ENCODE measurements at regions of chr4 and their contacts with region 1.

Region 1: DNA sequence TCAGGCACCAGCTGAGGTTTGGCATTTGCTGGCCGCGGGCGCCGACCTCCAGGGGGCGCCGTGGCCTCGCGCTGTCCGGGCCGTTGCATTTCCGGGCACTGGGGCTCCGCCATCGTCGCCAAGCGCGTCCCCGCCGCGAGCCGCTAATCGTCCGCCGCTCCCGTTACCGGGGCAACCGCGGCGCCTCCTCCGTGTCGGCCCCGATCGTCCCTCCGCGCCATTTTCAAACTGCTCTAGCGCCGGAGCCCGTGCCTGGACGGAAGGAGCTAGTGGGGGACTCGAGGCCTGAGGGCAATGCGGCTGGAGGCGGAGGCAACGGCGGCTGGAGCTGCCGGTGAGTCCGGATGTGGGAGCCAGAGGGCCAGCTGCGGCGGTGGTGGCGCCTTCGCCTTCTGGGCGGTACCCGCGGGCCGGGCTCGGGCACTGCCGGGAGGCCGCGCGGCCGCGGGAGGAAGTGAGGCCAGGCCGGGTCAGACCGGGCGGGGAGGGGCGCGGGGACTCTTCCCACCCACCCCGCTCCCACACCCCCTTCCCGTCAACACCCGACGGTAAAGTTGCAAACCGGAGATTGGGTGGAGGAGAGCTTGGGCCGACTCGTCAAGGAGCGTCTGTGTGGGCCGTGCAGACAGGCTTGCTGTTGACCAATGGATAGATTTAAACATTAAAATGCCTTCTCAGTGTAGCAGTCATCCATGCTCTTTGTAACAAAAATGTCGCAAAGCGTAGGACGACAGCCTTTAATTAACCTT is at the start of gene CEP135:
- DNase-seq: peak; percentile 96
- ATAC-seq: peak; percentile 78
- H3K4me3 ChIP-seq: peak within 1 kb of the TSS; percentile 73 to 91 (median 87)
- H3K4me3 Mint-ChIP-seq: peak within 1 kb of the TSS; percentile 89
- H3K27ac ChIP-seq: peak within 1 kb of the TSS; percentile 100
- H3K27ac Mint-ChIP-seq: peak within 1 kb of the TSS; percentile 98
- H3K4me1 ChIP-seq: peaks cover 30 to 37% of the 10 kb centered on the region in 2 donors
- H3K4me1 Mint-ChIP-seq: peaks cover 53% of the 10 kb centered on the region
- H3K27me3 ChIP-seq: no peaks in the 10 kb centered on the region
- H3K27me3 Mint-ChIP-seq: no peaks in the 10 kb centered on the region
- CTCF ChIP-seq: peak; percentile 99
- total RNA-seq, gene CEP135: 39.4 and 41.0 TPM in 2 replicates

Region 2: DNA sequence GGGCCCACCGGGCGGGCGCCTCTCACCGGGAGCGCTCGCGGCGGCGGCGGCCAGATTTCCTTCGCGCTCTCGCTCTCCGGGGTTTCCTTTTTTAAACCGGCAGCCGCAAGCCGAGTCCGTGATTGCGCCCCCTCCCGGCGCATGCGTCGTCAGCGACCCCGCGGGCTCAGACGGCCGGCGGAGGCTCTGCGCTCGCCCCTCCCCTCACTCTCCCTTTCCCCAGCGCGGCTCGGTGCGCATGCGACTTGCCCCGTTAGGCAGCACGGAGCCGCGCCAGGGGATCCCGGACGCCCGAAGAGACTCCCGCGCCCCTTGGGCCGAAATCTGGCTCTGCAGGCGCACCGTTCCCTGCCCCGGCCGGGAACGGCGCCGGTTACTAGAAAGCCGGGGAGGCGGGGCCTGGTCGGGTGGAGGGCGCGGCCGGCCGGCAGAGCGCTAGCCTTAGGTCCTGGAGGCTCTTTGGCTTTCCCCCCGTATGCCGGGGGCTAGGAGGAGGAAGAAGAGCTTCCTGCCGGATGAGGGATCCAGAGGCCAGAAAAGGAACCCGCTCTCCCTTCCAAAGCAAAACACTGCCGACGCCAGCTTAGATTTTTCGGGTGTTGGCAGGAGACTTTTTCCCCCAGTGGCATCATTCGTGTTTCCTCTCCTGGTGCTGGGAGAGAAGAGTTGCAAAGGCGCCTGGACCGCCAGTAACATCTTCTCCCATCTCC is 402.0 kb before region 1 on chr4 and contains the start of gene CLOCK:
- CTCF ChIA-PET with region 1: no interaction called
- POLR2A ChIA-PET with region 1: interaction called, 6 read pairs
- intact Hi-C with region 1: loop called (anchors 1 kb)
- DNase-seq: peak; percentile 94
- ATAC-seq: peak; percentile 75
- H3K4me3 ChIP-seq: peak within 1 kb of the TSS; percentile 67 to 95 (median 79)
- H3K4me3 Mint-ChIP-seq: peak within 1 kb of the TSS; percentile 97
- H3K27ac ChIP-seq: peak within 1 kb of the TSS; percentile 59 to 84
- H3K27ac Mint-ChIP-seq: peak within 1 kb of the TSS; percentile 96
- H3K4me1 ChIP-seq: peaks cover 6 to 9% of the 10 kb centered on the region in 2 donors
- H3K4me1 Mint-ChIP-seq: peaks cover 31% of the 10 kb centered on the region
- H3K27me3 ChIP-seq: no peaks in the 10 kb centered on the region
- H3K27me3 Mint-ChIP-seq: peaks cover 6% of the 10 kb centered on the region
- CTCF ChIP-seq: peak; percentile 58
- total RNA-seq, gene CLOCK: 14.2 and 15.2 TPM in 2 replicates

Region 3: DNA sequence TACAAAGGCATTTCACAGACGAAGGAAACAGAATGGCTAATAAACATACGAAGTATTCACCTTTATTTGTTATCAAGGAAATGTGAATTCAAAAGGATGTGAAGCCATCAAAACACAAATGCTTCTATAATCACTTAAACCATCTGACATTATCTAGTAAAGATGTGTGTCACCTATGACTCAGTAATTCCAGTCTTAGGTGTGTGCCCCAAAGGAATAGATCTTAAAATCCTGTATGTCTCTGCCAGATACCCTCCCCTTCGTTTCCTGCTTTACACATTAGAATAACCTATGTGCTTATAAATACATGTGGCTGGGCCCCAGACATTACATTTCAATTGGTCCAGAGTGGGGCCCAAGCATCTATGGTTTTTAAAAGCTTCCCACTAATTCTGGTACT is 41.9 kb before region 1 on chr4:
- CTCF ChIA-PET with region 1: interaction called, 3 read pairs
- POLR2A ChIA-PET with region 1: no interaction called
- intact Hi-C with region 1: loop called (anchors 5 kb)
- DNase-seq: no peak
- ATAC-seq: no peak
- H3K4me3 ChIP-seq: no peak overlapping the region
- H3K4me3 Mint-ChIP-seq: no peak overlapping the region
- H3K27ac ChIP-seq: no peak overlapping the region
- H3K27ac Mint-ChIP-seq: no peak overlapping the region
- H3K4me1 ChIP-seq: no peaks in the 10 kb centered on the region
- H3K4me1 Mint-ChIP-seq: peaks cover 6% of the 10 kb centered on the region
- H3K27me3 ChIP-seq: no peaks in the 10 kb centered on the region
- H3K27me3 Mint-ChIP-seq: no peaks in the 10 kb centered on the region
- CTCF ChIP-seq: no peak

Region 4: DNA sequence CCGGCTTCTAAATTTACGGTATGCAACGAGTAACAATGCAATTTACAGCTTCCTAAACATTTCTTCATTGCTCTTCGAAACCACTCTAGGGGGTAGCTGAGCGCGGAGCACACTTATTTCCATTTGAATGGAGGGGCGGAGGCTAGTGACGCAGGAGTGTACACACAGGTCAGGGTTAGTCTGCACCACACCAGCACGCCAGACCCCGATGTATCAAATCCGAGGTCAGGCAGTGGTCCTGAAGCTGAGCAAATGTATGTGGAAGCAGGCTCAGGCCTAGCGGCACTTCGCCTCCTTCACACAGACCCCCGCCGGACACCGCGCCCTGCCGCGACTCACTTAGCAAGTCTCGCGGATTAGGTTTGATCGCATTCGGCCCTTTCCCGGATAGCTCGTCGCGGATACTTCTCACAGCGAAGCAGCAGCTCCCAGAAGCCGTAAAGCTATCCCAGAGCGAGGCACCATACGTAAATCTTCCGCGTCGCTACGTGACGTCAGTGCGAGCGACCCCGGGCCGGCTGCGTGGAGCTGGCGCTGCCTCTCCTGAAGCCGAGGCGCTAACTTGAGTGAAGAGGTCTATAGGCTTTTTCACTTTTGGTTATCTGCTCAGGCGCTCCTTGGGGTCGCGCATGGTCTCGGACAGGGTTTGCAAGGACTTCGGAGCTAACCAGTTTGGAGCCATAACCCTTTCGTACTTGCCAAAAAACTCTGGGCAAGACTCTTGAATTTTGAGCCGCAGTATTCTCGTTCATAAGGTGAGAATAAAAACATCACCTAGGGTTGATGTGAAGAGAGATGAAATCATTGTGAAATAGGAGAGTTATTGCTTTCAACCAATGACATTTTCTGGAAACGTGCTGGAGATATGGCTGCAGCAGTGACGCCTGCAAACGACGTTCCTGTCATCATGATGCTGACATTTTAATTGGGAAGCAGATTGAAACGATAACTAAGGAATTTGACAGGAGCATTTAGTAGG is 438.4 kb after region 1 on chr4 and contains the start of gene AASDH:
- CTCF ChIA-PET with region 1: interaction called, 14 read pairs
- POLR2A ChIA-PET with region 1: interaction called, 14 read pairs
- intact Hi-C with region 1: loop called (anchors 1 kb)
- DNase-seq: peak; percentile 97
- ATAC-seq: peak; percentile 94
- H3K4me3 ChIP-seq: peak within 1 kb of the TSS; percentile 57 to 97 (median 81)
- H3K4me3 Mint-ChIP-seq: peak within 1 kb of the TSS; percentile 88
- H3K27ac ChIP-seq: peak within 1 kb of the TSS; percentile 86 to 89
- H3K27ac Mint-ChIP-seq: peak within 1 kb of the TSS; percentile 99
- H3K4me1 ChIP-seq: peaks cover 14% of the 10 kb centered on the region in 2 donors
- H3K4me1 Mint-ChIP-seq: peaks cover 30% of the 10 kb centered on the region
- H3K27me3 ChIP-seq: no peaks in the 10 kb centered on the region
- H3K27me3 Mint-ChIP-seq: no peaks in the 10 kb centered on the region
- CTCF ChIP-seq: no peak
- total RNA-seq, gene AASDH: 15.2 and 17.2 TPM in 2 replicates

Region 5: DNA sequence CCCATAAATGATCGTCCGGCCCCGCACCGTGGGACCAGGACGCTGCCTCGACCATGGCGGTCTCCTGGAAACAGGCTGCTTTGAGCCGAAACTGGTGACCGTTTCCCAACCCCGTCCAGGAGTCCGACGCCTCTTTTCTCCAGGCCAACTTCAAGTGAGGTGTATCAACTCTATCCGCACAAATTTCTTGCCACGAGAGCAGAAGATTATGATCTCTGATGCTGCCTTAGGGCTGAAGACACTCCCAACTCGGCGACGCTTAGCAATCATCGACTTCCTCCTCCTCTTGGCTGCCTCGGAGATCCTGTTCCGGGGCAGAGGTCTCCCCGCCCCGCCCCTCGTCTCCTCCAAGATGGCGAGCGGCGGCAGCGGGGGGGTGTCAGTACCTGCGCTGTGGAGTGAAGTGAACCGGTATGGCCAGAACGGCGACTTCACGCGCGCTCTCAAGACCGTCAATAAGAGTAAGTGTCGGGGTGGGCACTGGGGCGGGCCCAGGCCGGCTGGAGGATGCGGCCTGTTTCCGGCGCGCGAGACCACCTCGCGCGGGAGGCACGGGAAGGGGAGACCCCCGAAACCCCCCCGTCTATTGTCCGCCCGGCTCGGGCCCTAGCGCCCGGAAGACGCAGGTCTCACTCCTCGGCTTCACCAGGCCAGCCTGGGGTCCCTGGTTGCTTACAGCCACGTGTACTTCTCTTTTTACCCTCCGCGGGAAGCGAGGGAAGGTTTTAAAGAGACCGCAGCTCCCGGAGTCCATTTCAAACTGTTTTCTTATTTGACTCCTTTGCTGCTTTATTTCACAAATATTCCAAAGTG is 518.6 kb after region 1 on chr4 and contains the start of gene SRP72:
- CTCF ChIA-PET with region 1: interaction called, 8 read pairs
- POLR2A ChIA-PET with region 1: no interaction called
- intact Hi-C with region 1: loop called (anchors 1 kb)
- DNase-seq: peak; percentile 91
- ATAC-seq: peak; percentile 96
- H3K4me3 ChIP-seq: peak within 1 kb of the TSS; percentile 83 to 97 (median 89)
- H3K4me3 Mint-ChIP-seq: peak within 1 kb of the TSS; percentile 99
- H3K27ac ChIP-seq: peak within 1 kb of the TSS; percentile 73 to 81
- H3K27ac Mint-ChIP-seq: peak within 1 kb of the TSS; percentile 96
- H3K4me1 ChIP-seq: peaks cover 38 to 42% of the 10 kb centered on the region in 2 donors
- H3K4me1 Mint-ChIP-seq: peaks cover 56% of the 10 kb centered on the region
- H3K27me3 ChIP-seq: no peaks in the 10 kb centered on the region
- H3K27me3 Mint-ChIP-seq: no peaks in the 10 kb centered on the region
- CTCF ChIP-seq: no peak
- total RNA-seq, gene SRP72: 111 and 114 TPM in 2 replicates

Region 6: DNA sequence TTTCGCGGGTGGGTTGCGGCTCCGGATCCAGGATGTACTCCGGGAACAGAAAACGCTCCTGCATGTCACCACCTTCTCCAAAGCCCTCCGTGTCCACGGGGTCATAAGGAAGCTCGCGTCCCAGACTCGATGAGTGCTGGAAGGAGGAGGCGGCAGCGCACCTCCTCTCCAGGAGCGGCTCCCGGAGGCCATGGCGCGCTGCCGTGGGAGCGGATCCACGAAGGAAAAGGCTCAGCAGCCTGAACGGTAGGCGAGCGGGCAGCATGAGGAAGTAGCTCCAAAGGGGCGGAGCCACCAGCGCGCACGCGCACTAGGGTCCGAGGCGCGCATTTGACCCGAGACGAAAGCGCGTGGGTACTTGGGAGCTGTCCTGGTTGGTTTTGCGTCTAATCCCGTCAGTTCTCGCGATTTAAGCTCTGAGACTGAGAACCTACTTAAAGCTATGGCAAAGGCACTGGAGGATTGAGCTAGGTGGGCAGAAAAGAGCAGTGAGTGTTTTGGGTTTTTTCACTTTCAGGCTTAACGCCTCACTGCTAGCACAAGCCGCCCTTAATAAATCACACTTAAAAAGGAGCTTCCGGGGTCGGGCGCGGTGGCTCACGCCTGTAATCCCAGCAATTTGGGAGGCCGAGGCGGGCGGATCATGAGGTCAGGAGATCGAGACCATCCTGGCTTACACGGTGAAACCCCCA is 1028.6 kb after region 1 on chr4 and contains the start of gene NOA1:
- CTCF ChIA-PET with region 1: interaction called, 4 read pairs
- POLR2A ChIA-PET with region 1: interaction called, 4 read pairs
- intact Hi-C with region 1: loop called (anchors 1 kb)
- DNase-seq: peak; percentile 99
- ATAC-seq: peak; percentile 82
- H3K4me3 ChIP-seq: peak within 1 kb of the TSS; percentile 74 to 95 (median 91)
- H3K4me3 Mint-ChIP-seq: peak within 1 kb of the TSS; percentile 100
- H3K27ac ChIP-seq: peak within 1 kb of the TSS; percentile 73 to 84
- H3K27ac Mint-ChIP-seq: peak within 1 kb of the TSS; percentile 98
- H3K4me1 ChIP-seq: peaks cover 35 to 40% of the 10 kb centered on the region in 2 donors
- H3K4me1 Mint-ChIP-seq: peaks cover 57% of the 10 kb centered on the region
- H3K27me3 ChIP-seq: no peaks in the 10 kb centered on the region
- H3K27me3 Mint-ChIP-seq: no peaks in the 10 kb centered on the region
- CTCF ChIP-seq: no peak
- total RNA-seq, gene NOA1: 22.7 and 24.0 TPM in 2 replicates

Region 7: DNA sequence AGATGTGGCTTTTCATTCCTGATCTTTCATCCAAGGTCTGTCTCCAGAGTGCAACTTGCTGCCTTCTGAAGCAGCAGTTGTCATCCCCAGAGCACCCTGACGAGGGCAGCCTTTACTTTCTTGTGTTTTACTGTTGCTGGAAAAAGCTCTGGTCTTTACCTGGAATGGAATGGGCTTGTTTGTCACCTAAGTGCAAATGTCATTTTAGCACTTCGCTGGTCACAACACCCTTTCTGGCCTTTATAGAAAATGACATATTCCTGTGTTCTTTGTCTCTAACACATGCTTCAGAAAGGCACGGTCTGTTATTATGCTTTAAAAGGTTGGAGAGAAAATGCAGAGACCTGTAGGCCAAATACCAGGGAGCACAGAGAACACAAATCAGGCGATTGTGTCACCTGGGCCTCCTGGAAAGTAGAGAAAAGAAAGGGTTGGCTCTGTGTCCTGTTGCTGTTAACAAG is 1494.0 kb after region 1 on chr4:
- CTCF ChIA-PET with region 1: no interaction called
- POLR2A ChIA-PET with region 1: no interaction called
- intact Hi-C with region 1: no loop called
- DNase-seq: peak; percentile 2
- ATAC-seq: no peak
- H3K4me3 ChIP-seq: no peak overlapping the region
- H3K4me3 Mint-ChIP-seq: no peak overlapping the region
- H3K27ac ChIP-seq: no peak overlapping the region
- H3K27ac Mint-ChIP-seq: no peak overlapping the region
- H3K4me1 ChIP-seq: no peaks in the 10 kb centered on the region
- H3K4me1 Mint-ChIP-seq: no peaks in the 10 kb centered on the region
- H3K27me3 ChIP-seq: no peaks in the 10 kb centered on the region
- H3K27me3 Mint-ChIP-seq: no peaks in the 10 kb centered on the region
- CTCF ChIP-seq: no peak

Measured in B cell (primary cell).